Activated CD4-positive, alpha-beta T cell treated with anti-CD3 and anti-CD28 coated beads for 36 hours (primary cell): ENCODE measurements at regions of chr17 and their contacts with region 1.

Region 1: DNA sequence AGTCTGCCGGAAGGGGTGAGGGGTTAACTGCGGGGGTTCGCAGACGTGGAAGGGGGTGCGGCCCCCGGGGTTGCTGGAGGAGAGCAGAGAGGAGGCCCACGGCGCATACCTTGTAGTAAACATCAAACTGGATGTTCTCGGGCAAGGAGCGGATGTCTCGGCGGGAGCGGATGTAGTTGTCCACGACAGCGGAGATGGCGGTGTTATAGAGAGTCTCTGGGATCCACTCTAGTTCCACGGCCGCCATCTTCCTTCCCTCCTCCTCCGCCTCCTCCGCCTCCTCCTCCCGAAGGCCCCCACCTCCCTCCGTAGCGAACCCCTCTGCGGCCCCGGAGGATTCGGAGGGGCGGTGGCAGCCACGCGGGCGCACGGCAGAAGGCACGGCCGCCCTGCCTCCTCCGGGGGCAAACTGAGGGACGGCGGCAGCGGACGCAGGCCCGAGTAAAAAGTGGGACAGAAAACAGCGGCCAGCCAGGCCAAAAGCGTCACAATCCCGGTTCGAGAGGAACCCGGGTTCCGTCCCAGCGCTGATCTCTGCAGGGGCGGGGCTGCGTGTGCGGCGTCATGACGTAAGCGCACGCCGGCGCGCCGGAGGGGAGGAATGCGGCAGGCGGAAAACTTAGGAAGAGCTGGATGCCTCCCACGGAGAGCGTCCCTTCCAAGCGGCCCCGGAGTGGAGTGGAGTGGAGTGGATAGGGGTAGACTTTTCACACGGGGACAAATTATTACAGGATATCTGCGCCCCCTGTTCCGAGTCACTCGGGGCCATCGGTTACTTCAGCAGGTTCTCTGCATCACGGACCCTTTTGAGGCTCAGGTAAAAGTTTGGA is at the start of gene APPBP2:
- DNase-seq: peak; percentile 80
- ATAC-seq: peak; percentile 82
- H3K4me3 Mint-ChIP-seq: peak within 1 kb of the TSS; percentile 96
- H3K27ac Mint-ChIP-seq: peak within 1 kb of the TSS; percentile 97
- H3K4me1 Mint-ChIP-seq: peaks cover 30% of the 10 kb centered on the region
- H3K27me3 Mint-ChIP-seq: no peaks in the 10 kb centered on the region
- total RNA-seq, gene APPBP2: 21.4 to 28.8 TPM

Region 2: GRCh38 chr17:60506312-60506711 is 19.6 kb before region 1 on chr17:
- CTCF ChIA-PET with region 1: no interaction called
- POLR2A ChIA-PET with region 1: no interaction called
- intact Hi-C with region 1: no loop called
- DNase-seq: no peak
- ATAC-seq: peak; percentile 57
- H3K4me3 Mint-ChIP-seq: no peak overlapping the region
- H3K27ac Mint-ChIP-seq: peak overlapping the region; percentile 21
- H3K4me1 Mint-ChIP-seq: peaks cover 27% of the 10 kb centered on the region
- H3K27me3 Mint-ChIP-seq: no peaks in the 10 kb centered on the region

Region 3: GRCh38 chr17:60571551-60571950 is 45.7 kb after region 1 on chr17:
- CTCF ChIA-PET with region 1: interaction called, 3 read pairs
- POLR2A ChIA-PET with region 1: interaction called, 3 read pairs
- intact Hi-C with region 1: loop called in 1 of 2 experiments (anchors 2 kb)
- DNase-seq: no peak
- ATAC-seq: no peak
- H3K4me3 Mint-ChIP-seq: no peak overlapping the region
- H3K27ac Mint-ChIP-seq: no peak overlapping the region
- H3K4me1 Mint-ChIP-seq: no peaks in the 10 kb centered on the region
- H3K27me3 Mint-ChIP-seq: peaks cover 6% of the 10 kb centered on the region

Region 4: GRCh38 chr17:60677308-60678124 is 151.6 kb after region 1 on chr17 and contains the start of gene BCAS3:
- CTCF ChIA-PET with region 1: interaction called, 4 read pairs
- POLR2A ChIA-PET with region 1: no interaction called
- intact Hi-C with region 1: loop called in 1 of 2 experiments (anchors 1 kb)
- DNase-seq: peak; percentile 98
- ATAC-seq: peak; percentile 97
- H3K4me3 Mint-ChIP-seq: peak within 1 kb of the TSS; percentile 95
- H3K27ac Mint-ChIP-seq: peak within 1 kb of the TSS; percentile 84
- H3K4me1 Mint-ChIP-seq: peaks cover 16% of the 10 kb centered on the region
- H3K27me3 Mint-ChIP-seq: no peaks in the 10 kb centered on the region
- total RNA-seq, gene BCAS3: 7.2 to 7.5 TPM